ENCODE measurements at regions of chr2 and their contacts with region 1.

Region 1: DNA sequence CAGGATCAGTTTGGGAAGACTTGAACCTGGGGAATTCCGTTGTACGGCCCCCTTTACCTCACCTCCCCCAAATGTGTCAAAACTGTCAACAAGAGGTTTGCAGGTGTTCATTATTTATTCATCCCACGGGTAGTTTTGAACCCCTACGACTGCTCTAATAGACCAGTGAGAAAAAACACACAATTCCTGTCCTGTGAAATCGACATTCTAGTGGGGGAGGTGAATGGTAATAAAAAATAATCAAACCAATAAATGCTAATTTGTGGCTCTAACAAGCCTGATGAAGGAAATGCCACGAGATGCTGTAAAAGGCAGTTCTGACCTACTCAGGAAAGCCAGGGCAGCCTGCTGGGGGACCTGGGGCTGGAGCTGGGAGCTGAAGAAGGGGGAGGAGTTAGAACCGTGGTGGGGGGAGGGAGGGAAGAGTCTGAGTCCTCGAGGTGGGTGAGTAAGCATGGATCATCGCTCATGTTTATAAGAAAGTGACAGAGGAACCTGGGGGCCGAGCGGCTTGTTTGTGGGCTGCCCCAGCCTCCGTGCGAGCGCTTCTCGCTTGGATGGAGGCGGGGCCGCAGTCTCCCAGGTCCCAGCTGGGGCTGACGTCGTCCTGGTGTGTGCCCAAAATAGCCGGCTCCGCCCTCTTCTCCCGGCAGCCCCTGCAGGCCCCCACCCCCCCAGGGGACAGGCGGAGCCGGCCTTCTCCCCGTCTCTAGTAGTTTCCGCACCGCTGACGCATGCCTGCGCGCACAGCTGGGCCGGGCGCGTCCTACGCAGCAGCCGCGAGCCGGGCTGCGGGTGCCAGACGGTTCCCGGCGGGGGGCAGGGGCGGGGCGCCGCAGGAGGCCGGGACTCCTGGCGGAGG is at the start of gene DNAJB2:
- DNase-seq: peak; percentile 98 to 100 (median 99)
- H3K4me3 ChIP-seq: peak within 1 kb of the TSS; percentile 48 to 71
- H3K4me3 Mint-ChIP-seq: peak within 1 kb of the TSS; percentile 88 to 98 (median 96)
- H3K27ac ChIP-seq: peak within 1 kb of the TSS; percentile 98
- H3K27ac Mint-ChIP-seq: peak within 1 kb of the TSS; percentile 96 to 100 (median 100)
- H3K4me1 ChIP-seq: peaks cover 40% of the 10 kb centered on the region
- H3K4me1 Mint-ChIP-seq: peaks cover 17 to 51% (median 40%) of the 10 kb centered on the region in 4 donors
- H3K27me3 ChIP-seq: no peaks in the 10 kb centered on the region
- H3K27me3 Mint-ChIP-seq: no peaks in the 10 kb centered on the region
- total RNA-seq, gene DNAJB2: 110 to 117 TPM

Region 2: GRCh38 chr2:219177552-219178376 is 101.1 kb before region 1 on chr2 and contains the start of gene RETREG2:
- CTCF ChIA-PET with region 1: interaction called, 43 read pairs
- POLR2A ChIA-PET with region 1: interaction called, 64 read pairs
- intact Hi-C with region 1: loop called (anchors 1 kb)
- DNase-seq: peak; percentile 88 to 91 (median 88)
- H3K4me3 ChIP-seq: peak within 1 kb of the TSS; percentile 81 to 96
- H3K4me3 Mint-ChIP-seq: peak within 1 kb of the TSS; percentile 91 to 98 (median 95)
- H3K27ac ChIP-seq: peak within 1 kb of the TSS; percentile 91
- H3K27ac Mint-ChIP-seq: peak within 1 kb of the TSS; percentile 96 to 99 (median 98)
- H3K4me1 ChIP-seq: peaks cover 66% of the 10 kb centered on the region
- H3K4me1 Mint-ChIP-seq: peaks cover 34 to 79% (median 62%) of the 10 kb centered on the region in 4 donors
- H3K27me3 ChIP-seq: no peaks in the 10 kb centered on the region
- H3K27me3 Mint-ChIP-seq: no peaks in the 10 kb centered on the region
- total RNA-seq, gene RETREG2: 123 to 128 TPM

Region 3: GRCh38 chr2:219218732-219219701 is 59.9 kb before region 1 on chr2 and contains the start of gene ABCB6:
- CTCF ChIA-PET with region 1: interaction called, 3 read pairs
- POLR2A ChIA-PET with region 1: interaction called, 29 read pairs
- intact Hi-C with region 1: no loop called
- DNase-seq: peak; percentile 81 to 93 (median 83)
- H3K4me3 ChIP-seq: peak within 1 kb of the TSS; percentile 49 to 68
- H3K4me3 Mint-ChIP-seq: peak within 1 kb of the TSS; percentile 82 to 93 (median 84)
- H3K27ac ChIP-seq: peak within 1 kb of the TSS; percentile 53
- H3K27ac Mint-ChIP-seq: peak within 1 kb of the TSS; percentile 74 to 96 (median 88)
- H3K4me1 ChIP-seq: peaks cover 24% of the 10 kb centered on the region
- H3K4me1 Mint-ChIP-seq: peaks cover 8 to 25% (median 19%) of the 10 kb centered on the region in 4 donors
- H3K27me3 ChIP-seq: no peaks in the 10 kb centered on the region
- H3K27me3 Mint-ChIP-seq: no peaks in the 10 kb centered on the region
- total RNA-seq, gene ABCB6: 10.7 to 11.1 TPM

Region 4: DNA sequence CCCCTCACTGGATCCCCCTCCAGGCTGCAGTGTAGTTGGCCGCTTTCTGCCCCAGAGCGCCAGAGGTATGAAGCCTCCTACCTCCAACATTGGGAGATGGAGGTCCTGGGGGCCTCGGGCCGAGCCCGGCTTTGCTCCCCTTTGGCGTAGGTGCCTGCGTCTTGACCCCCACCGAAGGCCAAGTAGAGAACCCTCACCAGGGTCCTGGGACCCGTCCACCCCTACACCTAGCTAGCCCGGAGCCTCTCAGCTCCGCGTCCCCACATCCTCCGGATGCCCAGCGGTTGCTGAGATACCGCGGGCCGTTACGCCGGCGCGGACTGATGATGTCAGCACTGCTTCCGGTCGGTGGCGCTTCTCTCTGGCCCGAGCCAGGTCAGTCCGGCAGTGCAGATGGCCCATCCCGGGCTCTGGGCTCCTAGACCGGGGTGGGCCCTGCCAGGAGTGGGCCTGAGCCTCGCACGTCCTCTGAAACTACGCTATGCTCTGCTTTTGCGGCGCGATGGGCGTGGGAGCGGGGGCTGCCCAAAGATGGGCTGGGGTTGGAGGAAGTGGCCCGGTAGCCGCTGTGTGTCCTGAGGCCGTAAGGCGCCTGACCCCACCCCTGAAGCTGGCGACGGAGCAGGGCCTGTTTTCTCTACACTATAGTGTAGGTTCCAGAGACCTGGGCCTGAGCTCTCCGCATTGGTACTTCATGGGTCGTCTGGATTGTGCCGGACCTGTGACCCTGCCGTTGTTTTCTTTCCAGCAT is 33.6 kb before region 1 on chr2 and contains the starts of genes GLB1L and STK16:
- CTCF ChIA-PET with region 1: interaction called, 118 read pairs
- POLR2A ChIA-PET with region 1: interaction called, 338 read pairs
- intact Hi-C with region 1: no loop called
- DNase-seq: peak; percentile 85 to 88 (median 86)
- H3K4me3 ChIP-seq: peak within 1 kb of the TSS; percentile 45 to 97
- H3K4me3 Mint-ChIP-seq: peak within 1 kb of the TSS; percentile 85 to 99 (median 94)
- H3K27ac ChIP-seq: peak within 1 kb of the TSS; percentile 94
- H3K27ac Mint-ChIP-seq: peak within 1 kb of the TSS; percentile 96 to 99 (median 99)
- H3K4me1 ChIP-seq: peaks cover 59% of the 10 kb centered on the region
- H3K4me1 Mint-ChIP-seq: peaks cover 39 to 80% (median 56%) of the 10 kb centered on the region in 4 donors
- H3K27me3 ChIP-seq: no peaks in the 10 kb centered on the region
- H3K27me3 Mint-ChIP-seq: no peaks in the 10 kb centered on the region
- total RNA-seq, gene GLB1L: 1.5 to 2.5 TPM
- total RNA-seq, gene STK16: 19.3 to 21.1 TPM

Region 5: DNA sequence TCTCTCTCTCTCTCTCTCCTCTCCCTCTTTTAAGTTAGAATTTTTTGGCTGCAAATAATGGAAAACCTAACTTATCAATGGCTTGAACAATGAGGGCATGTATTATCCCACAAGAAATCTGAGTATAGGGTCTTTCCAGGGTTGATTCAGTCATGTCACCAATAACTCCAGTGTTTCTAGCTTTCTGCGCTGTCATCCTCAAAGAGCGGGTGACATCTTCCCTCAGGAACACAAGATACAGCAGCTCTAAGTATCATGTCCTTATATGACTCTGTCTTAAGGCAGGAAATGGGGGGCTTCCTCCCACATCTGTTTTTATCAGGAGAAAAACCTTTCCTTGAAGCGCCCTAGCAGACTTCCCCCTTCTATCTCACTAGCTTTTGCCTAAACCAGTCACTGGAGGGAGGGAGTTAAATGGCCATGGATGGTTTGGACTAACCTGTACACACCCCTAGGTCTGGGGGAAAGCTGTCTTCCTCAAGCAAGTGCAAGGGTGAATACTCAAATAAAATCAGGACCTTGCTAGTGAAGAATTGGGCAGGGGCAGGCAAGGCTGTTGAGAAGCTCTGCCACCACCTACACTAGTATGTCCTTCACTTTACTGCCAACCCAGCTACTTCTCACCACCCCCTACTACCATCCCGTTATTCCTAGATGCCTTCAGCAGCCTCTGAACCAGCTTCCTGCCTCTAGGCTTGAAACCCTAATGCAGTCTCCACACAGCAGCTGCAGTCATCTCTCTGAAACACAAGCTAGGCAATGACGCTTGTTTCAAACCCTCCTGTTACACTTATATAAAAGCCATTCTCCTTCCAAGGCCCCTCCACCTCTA is 17.6 kb before region 1 on chr2:
- CTCF ChIA-PET with region 1: interaction called, 118 read pairs
- POLR2A ChIA-PET with region 1: interaction called, 338 read pairs
- intact Hi-C with region 1: no loop called
- DNase-seq: no peak
- H3K4me3 ChIP-seq: no peak overlapping the region
- H3K4me3 Mint-ChIP-seq: no peak overlapping the region
- H3K27ac ChIP-seq: no peak overlapping the region
- H3K27ac Mint-ChIP-seq: no peak overlapping the region
- H3K4me1 ChIP-seq: no peaks in the 10 kb centered on the region
- H3K4me1 Mint-ChIP-seq: peaks cover 0 to 2% (median 2%) of the 10 kb centered on the region in 4 donors
- H3K27me3 ChIP-seq: no peaks in the 10 kb centered on the region
- H3K27me3 Mint-ChIP-seq: peaks cover 1 to 6% of the 10 kb centered on the region in 2 donors

Region 6: DNA sequence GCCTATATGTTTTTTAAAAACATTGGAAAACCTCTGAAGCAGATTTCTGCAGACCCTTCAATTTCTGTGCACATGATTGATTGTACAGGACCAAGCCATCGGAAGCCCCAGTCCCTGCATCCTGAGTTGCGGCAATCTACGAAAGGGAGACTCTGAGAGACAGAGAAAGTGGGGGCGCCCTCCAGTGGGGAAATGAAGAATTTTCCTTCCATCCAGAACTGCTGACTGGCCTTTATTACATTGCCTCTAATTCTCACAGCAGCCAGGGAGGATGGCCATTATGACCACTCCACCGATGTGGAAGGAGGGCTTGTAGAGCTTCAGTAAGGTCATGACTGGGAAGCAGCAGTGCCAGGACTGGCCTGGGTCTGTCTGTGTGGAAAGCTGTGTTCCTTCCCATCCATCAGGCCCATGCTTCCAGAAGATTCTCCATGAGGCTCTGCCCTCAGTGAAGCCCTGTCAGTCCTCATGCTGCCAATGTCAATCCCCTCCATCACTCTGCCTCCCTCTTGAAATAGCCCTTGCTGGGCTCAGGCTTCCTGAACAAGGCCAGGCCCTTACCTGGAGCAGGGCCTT is 73.7 kb after region 1 on chr2:
- CTCF ChIA-PET with region 1: no interaction called
- POLR2A ChIA-PET with region 1: no interaction called
- intact Hi-C with region 1: loop called (anchors 1 kb)
- DNase-seq: peak; percentile 45 to 62 (median 57)
- H3K4me3 ChIP-seq: no peak overlapping the region
- H3K4me3 Mint-ChIP-seq: no peak overlapping the region
- H3K27ac ChIP-seq: no peak overlapping the region
- H3K27ac Mint-ChIP-seq: no peak overlapping the region
- H3K4me1 ChIP-seq: no peaks in the 10 kb centered on the region
- H3K4me1 Mint-ChIP-seq: peaks cover 0 to 2% (median 0%) of the 10 kb centered on the region in 4 donors
- H3K27me3 ChIP-seq: no peaks in the 10 kb centered on the region
- H3K27me3 Mint-ChIP-seq: peaks cover 32 to 40% of the 10 kb centered on the region in 2 donors

Measured in CD4-positive, alpha-beta memory T cell (primary cell).